Panc1 (cell line): ENCODE measurements at regions of chr11 and their contacts with region 1.

Region 1: DNA sequence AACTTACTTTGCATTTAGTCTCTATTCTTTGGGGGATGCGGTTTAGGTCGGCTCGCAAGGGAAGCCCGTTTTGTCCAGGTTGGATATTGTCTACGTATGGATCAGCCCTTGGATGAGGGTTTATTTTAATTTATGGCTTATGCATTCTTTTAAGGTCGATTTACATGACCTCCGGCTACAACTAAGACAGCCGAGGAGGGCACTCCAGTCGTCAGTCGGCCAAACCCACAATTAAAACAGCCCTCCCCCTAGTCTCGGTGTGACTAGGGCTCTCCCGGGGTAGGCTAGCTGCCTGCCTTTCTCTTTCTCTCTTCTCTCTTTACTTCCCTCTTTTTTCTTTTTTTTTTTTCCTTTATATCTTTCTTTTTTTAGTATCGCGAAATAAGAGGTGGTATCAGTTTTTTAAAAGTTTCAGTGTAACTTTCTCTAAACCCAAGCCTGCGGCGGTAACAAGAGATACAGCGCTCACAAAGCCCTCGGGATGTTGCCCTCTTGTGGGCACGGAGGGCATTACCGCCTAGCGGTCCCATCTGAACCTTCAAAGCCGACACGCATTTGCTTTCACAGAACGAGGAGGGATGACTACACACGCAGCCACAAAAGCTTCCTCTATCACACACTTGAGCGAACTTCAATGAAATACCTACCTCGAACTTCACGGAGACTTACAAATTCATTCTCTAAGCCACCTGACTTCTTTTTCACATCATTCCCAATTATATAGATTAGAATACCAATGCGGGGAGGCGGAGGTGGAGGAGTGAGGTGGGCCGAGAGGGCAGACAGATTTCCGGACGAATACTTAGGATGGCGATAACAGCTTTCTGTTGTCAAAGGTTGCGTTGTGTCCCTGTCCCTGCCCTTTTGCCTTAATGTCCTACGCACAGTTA is 132.3 kb upstream of the C11orf58 start:
- DNase-seq: peak; percentile 60
- ATAC-seq: peak; percentile 84
- H3K4me3 ChIP-seq: peak overlapping the region; percentile 43 to 46
- H3K27ac ChIP-seq: no peak overlapping the region
- H3K4me1 ChIP-seq: peaks cover 13% of the 10 kb centered on the region
- H3K27me3 ChIP-seq: peaks cover 39% of the 10 kb centered on the region
- CTCF ChIP-seq: peak; percentile 96

Region 2: GRCh38 chr11:16584569-16584968 is 21.6 kb before region 1 on chr11:
- CTCF ChIA-PET with region 1: no interaction called
- POLR2A ChIA-PET with region 1: no interaction called
- in situ Hi-C with region 1: no loop called
- intact Hi-C with region 1: loop called (anchors 1 kb)
- DNase-seq: no peak
- ATAC-seq: no peak
- H3K4me3 ChIP-seq: no peak overlapping the region
- H3K27ac ChIP-seq: no peak overlapping the region
- H3K4me1 ChIP-seq: no peaks in the 10 kb centered on the region
- H3K27me3 ChIP-seq: no peaks in the 10 kb centered on the region
- CTCF ChIP-seq: no peak

Region 3: GRCh38 chr11:17154409-17155159 is 548.4 kb after region 1 on chr11:
- CTCF ChIA-PET with region 1: no interaction called
- POLR2A ChIA-PET with region 1: no interaction called
- in situ Hi-C with region 1: no loop called
- intact Hi-C with region 1: no loop called
- DNase-seq: no peak
- ATAC-seq: no peak
- H3K4me3 ChIP-seq: no peak overlapping the region
- H3K27ac ChIP-seq: no peak overlapping the region
- H3K4me1 ChIP-seq: no peaks in the 10 kb centered on the region
- H3K27me3 ChIP-seq: no peaks in the 10 kb centered on the region
- CTCF ChIP-seq: no peak